ENCODE measurements at regions of chr1 and their contacts with region 1.

Region 1: GRCh38 chr1:32981003-32981901 is 16.6 kb upstream of the RNF19B start:
- DNase-seq: no peak
- H3K4me3 ChIP-seq: no peak overlapping the region
- H3K27ac ChIP-seq: no peak overlapping the region
- H3K4me1 ChIP-seq: peaks cover 8 to 20% (median 10%) of the 10 kb centered on the region in 4 experiments; a peak in 6 of 7 replicates
- H3K27me3 ChIP-seq: peaks cover 0 to 2% (median 0%) of the 10 kb centered on the region in 4 experiments; a peak in 1 of 7 replicates
- CTCF ChIP-seq: no peak
- EP300 ChIP-seq: no peak
- POLR2A ChIP-seq: no peak
- RAD21 ChIP-seq: no peak

Region 2: DNA sequence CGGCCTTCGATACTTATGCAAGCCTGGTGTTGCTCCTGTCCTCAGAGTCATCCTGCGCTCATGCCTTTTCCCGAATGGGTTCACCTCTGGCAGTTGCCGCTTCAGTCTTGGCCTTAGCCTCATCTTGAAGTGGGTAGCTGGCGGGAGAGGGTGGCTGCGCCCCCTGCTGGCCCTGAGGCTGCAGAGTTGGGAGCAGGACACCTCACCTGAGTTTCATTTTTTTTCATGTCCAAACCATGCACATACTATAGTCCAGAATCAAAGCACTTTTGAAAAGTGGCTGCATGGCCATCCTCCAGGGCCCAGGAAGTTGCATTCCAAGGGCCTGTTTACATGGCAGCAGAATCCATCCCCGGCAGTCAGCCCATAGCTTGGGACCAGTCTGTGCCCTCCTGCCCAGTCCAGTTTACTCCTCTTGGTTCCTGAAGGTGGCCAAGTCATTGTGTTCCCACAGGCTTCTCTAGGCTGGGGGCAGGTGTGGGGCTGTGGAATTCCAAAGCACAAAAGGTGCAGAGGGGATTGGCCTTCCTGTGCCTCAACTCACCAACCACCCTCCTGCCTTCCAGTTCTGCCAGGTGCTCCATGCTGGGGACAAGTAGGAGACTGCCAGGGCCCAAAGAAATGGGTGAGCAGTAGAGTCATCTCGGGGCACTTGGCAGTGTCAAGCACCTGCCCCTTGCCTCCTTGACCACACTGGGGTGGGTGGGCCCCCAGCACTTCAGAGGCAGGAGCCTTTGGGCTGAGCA is 208.1 kb before region 1 on chr1:
- CTCF ChIA-PET with region 1: no interaction called
- POLR2A ChIA-PET with region 1: no interaction called
- DNase-seq: peak; percentile 74 to 92
- H3K4me3 ChIP-seq: no peak overlapping the region
- H3K27ac ChIP-seq: no peak overlapping the region
- H3K4me1 ChIP-seq: peaks cover 0 to 22% (median 9%) of the 10 kb centered on the region in 4 experiments; a peak in 6 of 7 replicates
- H3K27me3 ChIP-seq: no peaks in the 10 kb centered on the region
- CTCF ChIP-seq: peak; percentile 93 to 96 (median 95)
- EP300 ChIP-seq: no peak
- POLR2A ChIP-seq: 0 out of 3 replicates have a peak, but pooled peaks of 1 of the 2 experiments have one; percentile 57
- RAD21 ChIP-seq: peak; percentile 93 to 94

Region 3: DNA sequence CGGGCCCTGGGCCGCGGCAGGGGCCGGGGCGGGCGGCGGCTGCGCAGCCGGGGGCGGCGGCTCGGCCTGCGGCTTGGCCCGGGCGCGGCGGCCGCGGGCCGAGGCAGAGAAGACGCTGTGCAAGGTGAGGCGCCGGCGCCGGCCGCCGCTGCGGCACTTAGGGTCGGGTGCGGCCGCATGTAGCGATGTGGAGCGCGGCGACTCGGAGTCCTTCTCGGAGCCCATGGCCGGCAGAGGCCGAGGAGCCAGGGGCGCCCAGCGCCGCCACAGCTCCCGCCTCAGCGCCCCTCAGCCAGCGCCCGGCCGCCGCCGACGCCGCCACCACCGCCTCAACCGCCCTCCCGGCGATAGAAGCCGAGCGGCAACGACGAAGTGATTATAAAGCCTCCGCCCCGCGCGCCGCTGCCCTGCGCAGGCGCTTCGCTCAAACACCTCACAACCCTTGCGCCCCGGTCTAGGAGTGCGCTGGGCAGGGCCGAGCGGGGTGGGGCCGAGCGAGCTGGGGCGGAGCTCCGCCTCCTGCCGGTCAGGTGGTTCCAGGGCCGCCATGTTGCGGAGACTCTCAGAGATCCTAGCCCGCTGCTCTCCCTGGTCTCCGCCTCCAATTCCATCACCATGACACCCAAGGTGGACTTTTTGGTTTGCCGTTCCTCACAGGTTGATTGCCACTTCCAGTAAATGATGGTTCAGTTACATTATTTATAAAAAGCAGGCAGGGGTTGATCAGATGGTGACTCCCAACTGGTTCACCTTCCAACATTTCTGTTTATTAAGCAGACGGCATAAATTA is 16.6 kb before region 1 on chr1 and contains the start of gene RNF19B:
- CTCF ChIA-PET with region 1: no interaction called
- POLR2A ChIA-PET with region 1: interaction called, 15 read pairs
- DNase-seq: peak; percentile 80 to 96
- H3K4me3 ChIP-seq: peak within 1 kb of the TSS; percentile 70 to 83 (median 70)
- H3K27ac ChIP-seq: peak within 1 kb of the TSS; percentile 58; the same call in 1 of the 2 replicates
- H3K4me1 ChIP-seq: peaks cover 0 to 5% (median 1%) of the 10 kb centered on the region in 4 experiments; a peak in 3 of 7 replicates
- H3K27me3 ChIP-seq: peaks cover 0 to 6% (median 0%) of the 10 kb centered on the region in 4 experiments; a peak in 2 of 7 replicates
- CTCF ChIP-seq: no peak; a peak in 1 of 4 replicates
- EP300 ChIP-seq: no peak
- POLR2A ChIP-seq: peak; percentile 94 to 96
- RAD21 ChIP-seq: no peak
- total RNA-seq, gene RNF19B: 10.4 and 11.2 TPM in 2 replicates

Region 4: DNA sequence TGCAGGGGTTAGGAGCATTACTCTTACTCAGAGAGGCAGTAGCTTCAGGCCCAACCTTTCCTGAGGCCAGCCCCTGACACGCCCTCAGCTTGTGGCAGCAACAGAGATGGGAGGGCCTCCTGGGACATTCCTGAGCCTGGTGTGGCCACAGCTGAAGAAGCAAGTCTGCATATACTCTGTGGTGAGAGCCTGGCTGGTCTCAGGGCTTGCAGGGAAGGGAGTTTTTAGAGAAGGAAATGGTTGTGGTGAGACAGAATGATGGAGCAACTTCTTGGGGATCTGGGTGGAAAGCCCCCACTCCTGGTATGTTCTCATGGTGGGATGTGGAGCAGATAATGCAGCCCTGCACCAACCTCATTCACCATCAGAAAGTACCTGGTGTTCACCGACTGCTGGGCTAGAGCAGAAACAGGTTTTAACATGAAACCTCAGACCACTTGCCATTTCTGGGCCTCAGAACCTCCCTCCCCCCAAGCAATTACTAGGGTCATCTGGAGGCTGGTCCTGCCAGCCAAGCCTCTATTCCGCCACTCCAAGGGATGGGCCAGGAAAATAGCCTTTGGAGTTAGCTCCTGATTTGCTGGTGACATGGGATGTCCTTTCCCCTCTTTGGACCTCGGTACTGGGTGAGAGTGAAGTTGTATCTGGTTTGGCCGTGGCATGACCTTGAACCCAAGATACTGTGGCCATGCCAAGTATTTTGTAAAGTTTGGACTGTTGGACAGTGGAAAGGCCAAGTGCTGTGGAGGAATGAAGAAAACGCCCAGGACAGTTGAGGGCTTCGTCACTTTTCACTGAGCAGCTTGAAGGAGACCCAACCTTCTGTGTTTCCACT is 11.5 kb after region 1 on chr1:
- CTCF ChIA-PET with region 1: interaction called, 5 read pairs
- POLR2A ChIA-PET with region 1: interaction called, 11 read pairs
- DNase-seq: peak in 1 of 2 experiments; percentile 66
- H3K4me3 ChIP-seq: no peak overlapping the region
- H3K27ac ChIP-seq: no peak overlapping the region; the same call in 1 of the 2 replicates
- H3K4me1 ChIP-seq: peaks cover 0 to 15% (median 8%) of the 10 kb centered on the region in 4 experiments; a peak in 5 of 7 replicates
- H3K27me3 ChIP-seq: peaks cover 0 to 1% (median 0%) of the 10 kb centered on the region in 4 experiments; a peak in 1 of 7 replicates
- CTCF ChIP-seq: no peak
- EP300 ChIP-seq: no peak
- POLR2A ChIP-seq: no peak
- RAD21 ChIP-seq: 0 out of 4 replicates have a peak, but pooled peaks of 1 of the 2 experiments have one; percentile 6

Region 5: GRCh38 chr1:33147997-33148314 is 166.7 kb after region 1 on chr1:
- CTCF ChIA-PET with region 1: no interaction called
- POLR2A ChIA-PET with region 1: no interaction called
- DNase-seq: no peak
- H3K4me3 ChIP-seq: no peak overlapping the region
- H3K27ac ChIP-seq: no peak overlapping the region
- H3K4me1 ChIP-seq: peaks cover 9 to 18% (median 16%) of the 10 kb centered on the region in 4 experiments
- H3K27me3 ChIP-seq: no peaks in the 10 kb centered on the region
- CTCF ChIP-seq: peak; percentile 46 to 82 (median 79)
- EP300 ChIP-seq: no peak
- POLR2A ChIP-seq: no peak
- RAD21 ChIP-seq: peak; percentile 59 to 73

Measured in H1 (cell line).